Naive thymus-derived CD4-positive, alpha-beta T cell (primary cell): ENCODE measurements at regions of chr10 and their contacts with region 1.

Region 1: DNA sequence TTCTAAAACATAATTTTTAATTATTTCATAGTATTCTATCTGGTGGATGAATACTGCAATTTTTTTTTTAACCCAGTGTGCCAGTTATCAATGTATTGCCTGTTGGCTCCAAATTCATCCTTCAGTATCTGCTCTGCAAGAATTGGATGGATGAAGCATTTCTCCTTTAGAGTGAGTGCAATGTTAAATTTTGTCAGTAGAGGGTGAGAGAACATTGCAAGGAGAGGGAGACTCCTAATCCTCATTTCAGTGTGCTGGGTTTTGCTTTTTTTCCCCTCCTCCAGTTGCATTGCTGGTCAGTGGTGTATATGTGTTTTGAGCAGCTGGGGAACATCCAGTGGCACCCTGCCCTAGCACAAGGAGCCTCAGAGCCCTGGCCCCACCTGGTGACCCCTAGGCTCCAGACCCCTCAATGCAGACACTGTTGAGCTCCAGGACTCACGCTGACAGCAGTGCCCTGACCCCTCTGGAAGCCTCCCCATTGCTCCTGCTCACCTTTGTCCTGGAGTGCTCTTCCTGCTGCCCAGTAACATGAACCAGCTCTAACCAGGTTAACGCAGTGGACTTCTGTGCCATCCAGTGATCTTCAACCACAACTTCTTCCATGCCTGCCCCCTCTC is 199.4 kb downstream of the USP6NL start:
- DNase-seq: no peak
- ATAC-seq: no peak
- H3K4me3 ChIP-seq: no peak overlapping the region
- H3K4me3 Mint-ChIP-seq: peak overlapping the region in 1 of 10 donors; percentile 4
- H3K27ac ChIP-seq: no peak overlapping the region
- H3K27ac Mint-ChIP-seq: peak overlapping the region in 1 of 9 donors; percentile 5
- H3K4me1 ChIP-seq: peaks cover 13 to 16% of the 10 kb centered on the region in 2 donors
- H3K4me1 Mint-ChIP-seq: peaks cover 8 to 32% (median 23%) of the 10 kb centered on the region in 7 donors
- H3K27me3 ChIP-seq: no peaks in the 10 kb centered on the region
- H3K27me3 Mint-ChIP-seq: peaks cover 0 to 17% (median 0%) of the 10 kb centered on the region in 5 donors

Region 2: DNA sequence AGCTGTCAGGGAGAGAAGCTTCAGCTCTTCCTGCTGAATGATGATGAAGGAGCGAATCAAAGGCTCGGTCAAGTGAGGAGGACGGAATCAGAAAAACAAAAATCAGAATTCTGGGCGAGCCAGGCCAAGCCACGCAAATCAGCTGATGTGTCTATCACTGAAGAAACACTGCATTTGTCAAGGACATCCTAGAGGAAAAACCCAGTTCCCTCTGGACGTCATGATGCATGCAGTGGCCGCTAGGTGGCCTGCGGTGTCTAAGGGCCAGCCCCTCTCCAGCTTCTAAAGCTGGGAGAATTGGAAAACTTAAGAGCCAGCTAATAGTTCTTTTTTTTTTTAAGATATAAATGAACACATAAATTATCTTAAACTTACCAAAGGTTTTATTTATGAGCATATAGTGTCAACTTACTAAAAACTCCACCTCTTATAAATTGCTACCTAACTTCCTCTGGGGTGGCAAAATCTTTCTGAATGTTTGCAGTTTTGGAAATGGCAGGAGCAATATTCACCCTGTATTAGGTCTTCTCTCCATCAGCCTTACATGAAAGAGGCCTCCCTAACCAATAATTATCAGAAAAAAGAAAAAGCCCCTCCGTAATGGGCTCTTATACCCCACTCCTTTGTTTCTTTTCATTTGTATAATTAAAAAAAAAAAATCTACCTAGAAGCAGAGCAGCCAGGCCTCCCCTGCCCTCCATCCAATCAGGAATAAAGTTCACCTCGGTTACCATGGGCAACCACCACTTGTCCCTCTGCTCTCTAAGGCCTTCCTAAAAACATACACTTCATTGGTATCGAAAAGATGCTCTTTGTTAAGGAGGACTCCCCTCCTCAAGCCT is 12.6 kb after region 1 on chr10:
- CTCF ChIA-PET with region 1: no interaction called
- POLR2A ChIA-PET with region 1: interaction called, 5 read pairs
- intact Hi-C with region 1: loop called in 1 of 2 experiments (anchors 1 kb)
- DNase-seq: no peak
- ATAC-seq: no peak
- H3K4me3 ChIP-seq: no peak overlapping the region
- H3K4me3 Mint-ChIP-seq: no peak overlapping the region
- H3K27ac ChIP-seq: no peak overlapping the region
- H3K27ac Mint-ChIP-seq: peak overlapping the region in 3 of 9 donors; percentile 3 to 77 (median 16)
- H3K4me1 ChIP-seq: peaks cover 0 to 11% of the 10 kb centered on the region in 2 donors
- H3K4me1 Mint-ChIP-seq: peaks cover 8 to 33% (median 20%) of the 10 kb centered on the region in 7 donors
- H3K27me3 ChIP-seq: no peaks in the 10 kb centered on the region
- H3K27me3 Mint-ChIP-seq: peaks cover 0 to 11% (median 0%) of the 10 kb centered on the region in 5 donors

Region 3: DNA sequence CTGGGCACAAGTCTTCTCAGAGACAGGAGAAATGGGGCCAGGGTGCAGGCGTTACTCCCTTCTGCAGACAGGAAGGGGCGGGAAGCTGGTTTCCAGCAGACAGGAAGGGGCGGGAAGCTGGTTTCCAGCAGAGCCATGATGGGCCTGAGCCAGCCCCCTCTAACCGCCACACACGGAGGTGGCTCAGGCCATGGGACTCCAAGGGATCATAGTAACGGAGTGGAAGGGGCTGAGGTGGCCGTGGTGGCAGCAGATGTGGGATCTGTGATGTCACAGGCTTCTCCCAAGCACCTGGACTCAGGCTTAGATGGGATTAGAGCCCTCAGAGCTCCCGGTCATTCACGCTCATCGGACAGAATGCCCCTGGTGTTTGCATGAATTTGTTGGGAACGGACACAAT is 21.6 kb after region 1 on chr10:
- CTCF ChIA-PET with region 1: no interaction called
- POLR2A ChIA-PET with region 1: interaction called, 16 read pairs
- intact Hi-C with region 1: no loop called
- DNase-seq: no peak
- ATAC-seq: no peak
- H3K4me3 ChIP-seq: no peak overlapping the region
- H3K4me3 Mint-ChIP-seq: no peak overlapping the region
- H3K27ac ChIP-seq: no peak overlapping the region
- H3K27ac Mint-ChIP-seq: peak overlapping the region in 1 of 9 donors; percentile 25
- H3K4me1 ChIP-seq: no peaks in the 10 kb centered on the region
- H3K4me1 Mint-ChIP-seq: peaks cover 0 to 11% (median 4%) of the 10 kb centered on the region in 7 donors
- H3K27me3 ChIP-seq: no peaks in the 10 kb centered on the region
- H3K27me3 Mint-ChIP-seq: peaks cover 0 to 9% (median 0%) of the 10 kb centered on the region in 5 donors